HCT116 (cell line): ENCODE measurements at regions of chr16 and their contacts with region 1.

Region 1: GRCh38 chr16:29943846-29944669 is 17.8 kb upstream of the TMEM219 start:
- DNase-seq: peak; percentile 98
- ATAC-seq: peak; percentile 96
- H3K4me3 ChIP-seq: peak overlapping the region; percentile 21 to 41
- H3K27ac ChIP-seq: peak overlapping the region; percentile 93
- H3K4me1 ChIP-seq: peaks cover 31 to 41% of the 10 kb centered on the region in 2 experiments
- H3K27me3 ChIP-seq: no peaks in the 10 kb centered on the region
- CTCF ChIP-seq: peak; percentile 40 to 66 (median 42); a peak in 5 of 6 replicates
- POLR2A ChIP-seq: peak; percentile 19
- RAD21 ChIP-seq: peak; percentile 55

Region 2: DNA sequence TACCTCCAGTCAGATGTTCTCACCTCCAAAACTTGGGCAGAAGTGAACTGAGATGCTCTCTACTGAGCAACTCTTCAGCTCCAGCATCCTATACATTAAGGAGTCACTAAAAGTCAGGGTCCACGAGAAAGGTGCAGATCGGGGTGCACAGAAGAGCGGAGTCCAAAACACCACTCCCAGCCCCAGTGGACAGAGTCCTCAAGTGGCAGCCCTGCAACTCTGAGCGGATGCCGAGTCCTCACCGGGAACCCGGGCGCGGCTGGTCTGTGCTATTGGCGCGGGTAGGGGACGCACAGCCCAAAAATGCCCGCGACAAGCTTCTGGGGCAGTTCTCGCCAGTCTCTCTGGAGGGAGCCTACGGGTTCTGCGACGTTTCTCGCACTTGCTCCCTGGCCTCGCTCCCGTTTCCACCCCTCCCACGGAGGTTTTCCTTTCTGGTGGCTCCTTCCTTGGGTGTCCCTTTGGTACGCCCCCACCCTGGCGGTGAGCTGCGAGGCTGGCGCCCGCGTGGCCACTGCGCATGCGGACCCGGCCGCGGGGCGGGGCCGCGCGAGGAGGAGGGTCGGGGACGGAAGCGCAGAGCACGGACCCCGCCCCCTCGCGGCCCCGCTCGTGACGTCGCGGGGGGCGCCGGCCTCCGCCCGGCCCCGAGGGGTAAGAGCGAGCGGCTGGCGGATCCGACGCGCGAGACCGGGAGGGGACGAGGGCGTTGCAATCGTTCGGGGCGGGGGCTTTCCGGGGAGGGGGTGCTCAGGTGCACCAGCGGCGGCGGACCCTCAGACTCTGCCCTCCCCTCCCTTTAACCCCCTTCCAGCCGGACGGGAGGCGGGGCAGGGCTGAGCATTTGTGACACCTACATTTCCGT is 17.7 kb after region 1 on chr16 and contains the start of gene TMEM219:
- CTCF ChIA-PET with region 1: interaction called, 7 read pairs
- POLR2A ChIA-PET with region 1: interaction called, 15 read pairs
- RAD21 ChIA-PET with region 1: no interaction called
- intact Hi-C with region 1: no loop called
- DNase-seq: peak; percentile 56
- ATAC-seq: peak; percentile 96
- H3K4me3 ChIP-seq: peak within 1 kb of the TSS; percentile 64 to 71
- H3K27ac ChIP-seq: peak within 1 kb of the TSS; percentile 73
- H3K4me1 ChIP-seq: peaks cover 11 to 24% of the 10 kb centered on the region in 2 experiments
- H3K27me3 ChIP-seq: no peaks in the 10 kb centered on the region
- CTCF ChIP-seq: peak in 2 of 3 experiments; percentile 27 to 35; a peak in 3 of 6 replicates
- POLR2A ChIP-seq: no peak
- RAD21 ChIP-seq: no peak
- total RNA-seq, gene TMEM219: 75.5 TPM